Aorta (tissue), 5 donors: ENCODE measurements at regions of chr7 and their contacts with region 1.

Region 1: DNA sequence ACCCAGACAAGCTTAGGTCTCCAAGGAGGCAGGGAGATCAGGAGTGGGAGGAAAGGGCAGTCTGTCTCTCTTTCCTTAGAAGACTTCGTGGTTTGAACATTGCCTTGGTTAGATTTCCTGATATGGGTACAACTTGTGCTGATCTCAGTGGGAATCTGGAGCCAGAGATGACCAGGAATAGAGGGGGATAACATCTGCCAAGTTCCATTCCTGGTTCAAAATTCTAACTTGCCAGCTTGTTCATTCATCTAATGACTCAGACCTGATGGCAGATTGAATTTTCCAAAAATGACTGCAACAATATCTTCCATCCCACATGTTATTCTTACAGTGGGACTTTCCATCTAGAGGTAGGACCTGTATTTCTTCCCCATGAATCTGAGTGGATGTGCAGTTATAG is 394.3 kb upstream of the PODXL start:
- DNase-seq: no peak
- ATAC-seq: peak; percentile 60
- H3K4me3 ChIP-seq: no peak overlapping the region
- H3K27ac ChIP-seq: peak overlapping the region; percentile 82 to 98
- H3K4me1 ChIP-seq: peaks cover 3 to 8% of the 10 kb centered on the region in 2 donors
- H3K27me3 ChIP-seq: no peaks in the 10 kb centered on the region

Region 2: GRCh38 chr7:131042269-131043160 is 908.2 kb before region 1 on chr7:
- intact Hi-C with region 1: no loop called
- DNase-seq: no peak
- ATAC-seq: no peak
- H3K4me3 ChIP-seq: no peak overlapping the region
- H3K27ac ChIP-seq: no peak overlapping the region
- H3K4me1 ChIP-seq: peaks cover 0 to 4% of the 10 kb centered on the region in 2 donors
- H3K27me3 ChIP-seq: no peaks in the 10 kb centered on the region

Region 3: GRCh38 chr7:131961054-131961680 is 10.4 kb after region 1 on chr7:
- intact Hi-C with region 1: no loop called
- DNase-seq: no peak
- ATAC-seq: no peak
- H3K4me3 ChIP-seq: no peak overlapping the region
- H3K27ac ChIP-seq: no peak overlapping the region
- H3K4me1 ChIP-seq: no peaks in the 10 kb centered on the region
- H3K27me3 ChIP-seq: no peaks in the 10 kb centered on the region

Region 4: GRCh38 chr7:132191418-132191817 is 240.7 kb after region 1 on chr7:
- intact Hi-C with region 1: loop called in 1 of 2 experiments (anchors 2 kb)
- DNase-seq: peak; percentile 50 to 63
- ATAC-seq: peak; percentile 45
- H3K4me3 ChIP-seq: no peak overlapping the region
- H3K27ac ChIP-seq: no peak overlapping the region
- H3K4me1 ChIP-seq: no peaks in the 10 kb centered on the region
- H3K27me3 ChIP-seq: no peaks in the 10 kb centered on the region